ENCODE measurements at regions of chr19 and their contacts with region 1.

Region 1: GRCh38 chr19:11924886-11925650 is at the start of gene ZNF700:
- DNase-seq: peak; percentile 96
- ATAC-seq: peak; percentile 85
- H3K4me3 ChIP-seq: peak within 1 kb of the TSS; percentile 78 to 97 (median 80)
- H3K4me3 Mint-ChIP-seq: peak within 1 kb of the TSS; percentile 98
- H3K27ac ChIP-seq: peak within 1 kb of the TSS; percentile 95 to 97
- H3K27ac Mint-ChIP-seq: peak within 1 kb of the TSS; percentile 99
- H3K4me1 ChIP-seq: peaks cover 10 to 28% of the 10 kb centered on the region in 2 donors
- H3K4me1 Mint-ChIP-seq: peaks cover 40% of the 10 kb centered on the region
- H3K27me3 ChIP-seq: no peaks in the 10 kb centered on the region
- H3K27me3 Mint-ChIP-seq: no peaks in the 10 kb centered on the region
- CTCF ChIP-seq: no peak
- total RNA-seq, gene ZNF700: 34.9 and 40.5 TPM in 2 replicates

Region 2: DNA sequence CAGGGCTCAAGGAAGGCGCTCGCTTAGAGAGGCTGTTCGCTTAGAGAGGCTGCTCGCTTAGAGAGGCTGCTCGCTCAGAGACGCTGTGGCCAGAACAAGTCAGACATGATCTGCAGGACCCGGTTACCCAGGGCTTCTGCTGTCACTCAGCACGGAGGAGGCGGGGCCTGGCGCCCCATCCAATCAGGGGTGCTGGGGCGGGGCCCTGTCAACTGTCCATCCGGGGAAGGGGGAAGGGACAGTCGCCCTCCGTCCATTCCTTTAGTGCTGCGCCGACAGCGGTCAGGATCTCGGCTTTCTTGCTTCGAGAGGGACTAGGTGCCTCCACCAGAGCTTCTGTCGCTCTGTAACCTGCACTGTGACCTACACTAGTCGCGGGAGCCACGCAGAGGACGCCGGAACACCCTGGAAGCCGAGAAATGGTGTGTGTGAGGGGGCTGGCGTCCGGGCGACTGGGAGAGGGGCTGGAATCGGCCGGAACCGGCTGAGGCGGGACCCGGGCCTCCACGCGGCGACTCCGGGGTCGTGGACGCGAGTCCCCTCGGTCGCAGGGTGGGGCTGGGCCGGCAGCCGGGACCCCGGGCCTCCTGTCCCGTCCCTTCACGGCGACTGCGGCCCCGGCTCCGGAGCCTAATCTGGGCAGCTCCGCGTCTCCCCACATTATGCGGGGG is 110.9 kb before region 1 on chr19 and contains the start of gene ZNF440:
- CTCF ChIA-PET with region 1: interaction called, 6 read pairs
- POLR2A ChIA-PET with region 1: interaction called, 3 read pairs
- intact Hi-C with region 1: loop called (anchors 1 kb)
- DNase-seq: peak; percentile 85
- ATAC-seq: peak; percentile 99
- H3K4me3 ChIP-seq: peak within 1 kb of the TSS; percentile 75 to 94 (median 82)
- H3K4me3 Mint-ChIP-seq: peak within 1 kb of the TSS; percentile 91
- H3K27ac ChIP-seq: peak within 1 kb of the TSS; percentile 39 to 66
- H3K27ac Mint-ChIP-seq: peak within 1 kb of the TSS; percentile 85
- H3K4me1 ChIP-seq: peaks cover 4 to 14% of the 10 kb centered on the region in 2 donors
- H3K4me1 Mint-ChIP-seq: peaks cover 29% of the 10 kb centered on the region
- H3K27me3 ChIP-seq: no peaks in the 10 kb centered on the region
- H3K27me3 Mint-ChIP-seq: no peaks in the 10 kb centered on the region
- CTCF ChIP-seq: no peak
- total RNA-seq, gene ZNF440: 22.4 and 23.4 TPM in 2 replicates

Region 3: DNA sequence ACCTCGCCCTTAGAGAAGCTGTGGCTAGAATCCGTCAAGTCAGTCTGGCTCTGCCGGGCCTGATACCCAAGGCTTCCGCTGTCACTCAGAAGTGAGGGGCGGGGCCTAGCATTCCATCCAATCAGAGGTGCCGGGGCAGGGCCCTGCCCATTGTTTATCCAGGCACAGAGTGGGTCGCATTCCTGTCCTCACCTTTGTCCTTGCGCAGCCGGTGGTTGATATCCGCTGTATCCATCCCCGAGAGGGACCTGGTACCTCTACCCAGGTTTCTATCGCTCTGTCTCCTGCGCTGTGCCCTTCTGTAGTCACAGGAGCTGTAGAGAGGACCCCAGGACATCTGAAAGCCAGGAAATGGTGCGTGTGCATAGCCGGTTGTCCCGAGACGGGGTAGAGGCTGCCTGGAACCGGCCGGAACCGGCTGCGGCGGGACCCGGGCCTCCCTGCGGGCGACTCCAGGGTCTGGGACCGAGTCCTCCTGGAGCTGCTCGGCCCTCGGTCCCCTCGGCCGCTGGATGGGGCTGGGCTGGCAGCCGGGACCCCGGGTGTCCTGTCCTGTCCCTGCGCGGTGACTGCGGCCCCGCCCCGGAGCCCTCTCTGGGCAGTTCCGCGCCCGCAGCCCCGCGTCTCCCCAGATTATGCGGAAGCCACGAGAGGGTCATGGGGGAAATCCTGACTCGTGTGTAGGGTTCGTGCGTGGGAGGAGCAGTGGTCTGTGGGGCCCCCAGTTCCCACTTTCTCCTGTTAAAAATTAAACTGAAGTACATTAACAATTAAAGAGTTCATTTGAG is 40.0 kb after region 1 on chr19 and contains the start of gene ZNF763:
- CTCF ChIA-PET with region 1: interaction called, 87 read pairs
- POLR2A ChIA-PET with region 1: interaction called, 11 read pairs
- intact Hi-C with region 1: loop called (anchors 1 kb)
- DNase-seq: peak; percentile 95
- ATAC-seq: peak; percentile 91
- H3K4me3 ChIP-seq: peak within 1 kb of the TSS; percentile 76 to 97 (median 89)
- H3K4me3 Mint-ChIP-seq: peak within 1 kb of the TSS; percentile 99
- H3K27ac ChIP-seq: peak within 1 kb of the TSS; percentile 99
- H3K27ac Mint-ChIP-seq: peak within 1 kb of the TSS; percentile 99
- H3K4me1 ChIP-seq: peaks cover 14 to 20% of the 10 kb centered on the region in 2 donors
- H3K4me1 Mint-ChIP-seq: peaks cover 27% of the 10 kb centered on the region
- H3K27me3 ChIP-seq: no peaks in the 10 kb centered on the region
- H3K27me3 Mint-ChIP-seq: no peaks in the 10 kb centered on the region
- CTCF ChIP-seq: no peak
- total RNA-seq, gene ZNF763: 14.2 and 16.6 TPM in 2 replicates

Region 4: GRCh38 chr19:11978492-11979100 is 53.5 kb after region 1 on chr19:
- CTCF ChIA-PET with region 1: no interaction called
- POLR2A ChIA-PET with region 1: no interaction called
- intact Hi-C with region 1: no loop called
- DNase-seq: no peak
- ATAC-seq: no peak
- H3K4me3 ChIP-seq: no peak overlapping the region
- H3K4me3 Mint-ChIP-seq: no peak overlapping the region
- H3K27ac ChIP-seq: no peak overlapping the region
- H3K27ac Mint-ChIP-seq: no peak overlapping the region
- H3K4me1 ChIP-seq: peaks cover 3 to 7% of the 10 kb centered on the region in 2 donors
- H3K4me1 Mint-ChIP-seq: peaks cover 6% of the 10 kb centered on the region
- H3K27me3 ChIP-seq: no peaks in the 10 kb centered on the region
- H3K27me3 Mint-ChIP-seq: no peaks in the 10 kb centered on the region
- CTCF ChIP-seq: no peak

Region 5: GRCh38 chr19:12052497-12053169 is 127.6 kb after region 1 on chr19 and contains the start of gene ZNF878:
- CTCF ChIA-PET with region 1: interaction called, 20 read pairs
- POLR2A ChIA-PET with region 1: no interaction called
- intact Hi-C with region 1: no loop called
- DNase-seq: peak; percentile 67
- ATAC-seq: peak; percentile 87
- H3K4me3 ChIP-seq: peak within 1 kb of the TSS; percentile 60 to 91 (median 70)
- H3K4me3 Mint-ChIP-seq: peak within 1 kb of the TSS; percentile 90
- H3K27ac ChIP-seq: no peak within 1 kb of the TSS
- H3K27ac Mint-ChIP-seq: no peak within 1 kb of the TSS
- H3K4me1 ChIP-seq: peaks cover 9 to 14% of the 10 kb centered on the region in 2 donors
- H3K4me1 Mint-ChIP-seq: peaks cover 10% of the 10 kb centered on the region
- H3K27me3 ChIP-seq: peaks cover 0 to 4% (median 2%) of the 10 kb centered on the region in 4 experiments
- H3K27me3 Mint-ChIP-seq: peaks cover 19% of the 10 kb centered on the region
- CTCF ChIP-seq: no peak
- total RNA-seq, gene ZNF878: 0.29 TPM in 1 of 2 replicates, not detected in the other

Region 6: GRCh38 chr19:12139885-12140547 is 214.9 kb after region 1 on chr19 and contains the start of gene ZNF20:
- CTCF ChIA-PET with region 1: interaction called, 85 read pairs
- POLR2A ChIA-PET with region 1: interaction called, 15 read pairs
- intact Hi-C with region 1: loop called (anchors 1 kb)
- DNase-seq: peak; percentile 91
- ATAC-seq: peak; percentile 96
- H3K4me3 ChIP-seq: peak within 1 kb of the TSS; percentile 73 to 93 (median 83)
- H3K4me3 Mint-ChIP-seq: peak within 1 kb of the TSS; percentile 84
- H3K27ac ChIP-seq: peak within 1 kb of the TSS; percentile 31 to 62
- H3K27ac Mint-ChIP-seq: peak within 1 kb of the TSS; percentile 86
- H3K4me1 ChIP-seq: peaks cover 15 to 23% of the 10 kb centered on the region in 2 donors
- H3K4me1 Mint-ChIP-seq: peaks cover 34% of the 10 kb centered on the region
- H3K27me3 ChIP-seq: no peaks in the 10 kb centered on the region
- H3K27me3 Mint-ChIP-seq: no peaks in the 10 kb centered on the region
- CTCF ChIP-seq: no peak
- total RNA-seq, gene ZNF20: 5.4 and 10.6 TPM in 2 replicates

Measured in B cell (primary cell).